H1 (cell line): ENCODE measurements at regions of chr7 and their contacts with region 1.

Region 1: GRCh38 chr7:77651573-77652162 is 44.6 kb upstream of the RSBN1L start:
- DNase-seq: peak in 1 of 2 experiments; percentile 44
- H3K4me3 ChIP-seq: no peak overlapping the region
- H3K27ac ChIP-seq: no peak overlapping the region
- H3K4me1 ChIP-seq: no peaks in the 10 kb centered on the region
- H3K27me3 ChIP-seq: no peaks in the 10 kb centered on the region
- CTCF ChIP-seq: peak in 2 of 3 experiments; percentile 54; a peak in 2 of 4 replicates
- EP300 ChIP-seq: no peak
- POLR2A ChIP-seq: no peak
- RAD21 ChIP-seq: peak; percentile 56 to 63

Region 2: DNA sequence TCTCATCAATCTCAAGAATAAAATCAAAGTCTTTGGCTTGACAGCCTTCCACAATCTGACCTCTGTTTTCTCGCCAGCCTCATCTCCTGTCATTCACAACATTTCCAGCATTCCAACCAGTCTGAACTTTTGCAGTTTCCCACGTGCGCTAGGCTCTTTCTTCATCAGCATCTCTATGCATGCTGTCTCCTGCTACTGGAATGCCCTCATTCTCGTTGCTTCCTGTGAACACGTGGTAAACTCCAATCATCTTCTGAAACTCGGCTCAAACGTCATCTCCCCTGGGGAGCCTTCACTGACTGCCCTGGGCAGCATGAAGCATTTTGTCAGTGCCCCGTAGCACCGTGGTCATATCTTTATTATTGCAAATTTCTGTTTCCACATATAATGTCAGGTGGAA is 32.4 kb after region 1 on chr7:
- CTCF ChIA-PET with region 1: interaction called, 11 read pairs
- POLR2A ChIA-PET with region 1: no interaction called
- DNase-seq: peak in 1 of 2 experiments; percentile 35
- H3K4me3 ChIP-seq: no peak overlapping the region
- H3K27ac ChIP-seq: no peak overlapping the region
- H3K4me1 ChIP-seq: peaks cover 0 to 7% (median 5%) of the 10 kb centered on the region in 4 experiments; a peak in 4 of 7 replicates
- H3K27me3 ChIP-seq: no peaks in the 10 kb centered on the region
- CTCF ChIP-seq: no peak
- EP300 ChIP-seq: no peak
- POLR2A ChIP-seq: no peak
- RAD21 ChIP-seq: no peak